ENCODE measurements at regions of chr2 and their contacts with region 1.

Region 1: DNA sequence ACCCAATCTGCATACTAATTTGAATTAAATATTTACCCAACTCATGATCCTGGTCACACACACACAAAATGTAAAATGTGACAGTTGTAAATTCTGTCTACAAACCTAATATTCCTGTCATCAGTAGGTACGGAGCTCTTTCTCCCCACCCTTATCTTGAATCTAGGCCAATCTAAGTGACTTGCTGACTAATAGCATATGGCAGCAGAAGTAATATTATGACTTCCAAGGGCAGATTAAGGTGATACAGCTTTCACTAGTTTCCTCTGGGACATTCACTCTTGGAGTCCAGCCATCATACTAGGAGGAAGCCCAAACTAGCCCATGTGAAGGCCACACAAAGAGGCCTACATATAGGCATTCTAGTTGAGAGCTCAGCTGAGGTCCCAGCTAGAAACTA is 89.4 kb downstream of the TMEM131 start:
- DNase-seq: no peak
- ATAC-seq: no peak
- H3K4me3 ChIP-seq: no peak overlapping the region
- H3K27ac ChIP-seq: peak overlapping the region; percentile 76; the same call in 1 of the 2 replicates
- H3K4me1 ChIP-seq: peaks cover 40% of the 10 kb centered on the region
- H3K27me3 ChIP-seq: no peaks in the 10 kb centered on the region
- CTCF ChIP-seq: no peak
- EP300 ChIP-seq: no peak
- POLR2A ChIP-seq: no peak
- RAD21 ChIP-seq: no peak

Region 2: GRCh38 chr2:97816411-97816810 is 89.9 kb before region 1 on chr2:
- CTCF ChIA-PET with region 1: no interaction called
- POLR2A ChIA-PET with region 1: no interaction called
- RAD21 ChIA-PET with region 1: no interaction called
- SMC1A ChIA-PET with region 1: no interaction called
- in situ Hi-C with region 1: no loop called
- intact Hi-C with region 1: no loop called
- DNase-seq: no peak
- ATAC-seq: no peak
- H3K4me3 ChIP-seq: no peak overlapping the region
- H3K27ac ChIP-seq: no peak overlapping the region
- H3K4me1 ChIP-seq: no peaks in the 10 kb centered on the region
- H3K27me3 ChIP-seq: no peaks in the 10 kb centered on the region
- CTCF ChIP-seq: no peak
- EP300 ChIP-seq: no peak
- POLR2A ChIP-seq: no peak
- RAD21 ChIP-seq: no peak

Region 3: GRCh38 chr2:97870396-97870843 is 35.9 kb before region 1 on chr2:
- CTCF ChIA-PET with region 1: interaction called, 3 read pairs
- POLR2A ChIA-PET with region 1: interaction called, 3 read pairs
- RAD21 ChIA-PET with region 1: interaction called, 6 read pairs
- SMC1A ChIA-PET with region 1: interaction called, 17 read pairs
- in situ Hi-C with region 1: no loop called
- intact Hi-C with region 1: loop called (anchors 2 kb)
- DNase-seq: peak; percentile 87
- ATAC-seq: peak; percentile 100
- H3K4me3 ChIP-seq: no peak overlapping the region
- H3K27ac ChIP-seq: peak overlapping the region; percentile 33; the same call in 1 of the 2 replicates
- H3K4me1 ChIP-seq: peaks cover 20% of the 10 kb centered on the region
- H3K27me3 ChIP-seq: no peaks in the 10 kb centered on the region
- CTCF ChIP-seq: peak in 2 of 3 experiments; percentile 13 to 66; a peak in 3 of 6 replicates
- EP300 ChIP-seq: peak in 1 of 2 experiments; percentile 41; a peak in 1 of 4 replicates
- POLR2A ChIP-seq: no peak
- RAD21 ChIP-seq: peak; percentile 64

Region 4: GRCh38 chr2:97935719-97936161 is 29.4 kb after region 1 on chr2:
- CTCF ChIA-PET with region 1: interaction called, 8 read pairs
- POLR2A ChIA-PET with region 1: interaction called, 13 read pairs
- RAD21 ChIA-PET with region 1: interaction called, 36 read pairs
- SMC1A ChIA-PET with region 1: interaction called, 12 read pairs
- in situ Hi-C with region 1: no loop called
- intact Hi-C with region 1: no loop called
- DNase-seq: no peak
- ATAC-seq: peak; percentile 25
- H3K4me3 ChIP-seq: peak overlapping the region; percentile 11; the same call in 1 of the 2 replicates
- H3K27ac ChIP-seq: peak overlapping the region; percentile 63
- H3K4me1 ChIP-seq: peaks cover 55% of the 10 kb centered on the region
- H3K27me3 ChIP-seq: no peaks in the 10 kb centered on the region
- CTCF ChIP-seq: no peak
- EP300 ChIP-seq: no peak
- POLR2A ChIP-seq: no peak
- RAD21 ChIP-seq: no peak

Region 5: GRCh38 chr2:97950329-97951154 is 44.2 kb after region 1 on chr2:
- CTCF ChIA-PET with region 1: interaction called, 3 read pairs
- POLR2A ChIA-PET with region 1: interaction called, 3 read pairs
- RAD21 ChIA-PET with region 1: interaction called, 6 read pairs
- SMC1A ChIA-PET with region 1: interaction called, 8 read pairs
- in situ Hi-C with region 1: no loop called
- intact Hi-C with region 1: loop called (anchors 2 kb)
- DNase-seq: no peak
- ATAC-seq: no peak
- H3K4me3 ChIP-seq: no peak overlapping the region
- H3K27ac ChIP-seq: no peak overlapping the region
- H3K4me1 ChIP-seq: peaks cover 38% of the 10 kb centered on the region
- H3K27me3 ChIP-seq: no peaks in the 10 kb centered on the region
- CTCF ChIP-seq: no peak
- EP300 ChIP-seq: no peak
- POLR2A ChIP-seq: no peak
- RAD21 ChIP-seq: no peak

Region 6: DNA sequence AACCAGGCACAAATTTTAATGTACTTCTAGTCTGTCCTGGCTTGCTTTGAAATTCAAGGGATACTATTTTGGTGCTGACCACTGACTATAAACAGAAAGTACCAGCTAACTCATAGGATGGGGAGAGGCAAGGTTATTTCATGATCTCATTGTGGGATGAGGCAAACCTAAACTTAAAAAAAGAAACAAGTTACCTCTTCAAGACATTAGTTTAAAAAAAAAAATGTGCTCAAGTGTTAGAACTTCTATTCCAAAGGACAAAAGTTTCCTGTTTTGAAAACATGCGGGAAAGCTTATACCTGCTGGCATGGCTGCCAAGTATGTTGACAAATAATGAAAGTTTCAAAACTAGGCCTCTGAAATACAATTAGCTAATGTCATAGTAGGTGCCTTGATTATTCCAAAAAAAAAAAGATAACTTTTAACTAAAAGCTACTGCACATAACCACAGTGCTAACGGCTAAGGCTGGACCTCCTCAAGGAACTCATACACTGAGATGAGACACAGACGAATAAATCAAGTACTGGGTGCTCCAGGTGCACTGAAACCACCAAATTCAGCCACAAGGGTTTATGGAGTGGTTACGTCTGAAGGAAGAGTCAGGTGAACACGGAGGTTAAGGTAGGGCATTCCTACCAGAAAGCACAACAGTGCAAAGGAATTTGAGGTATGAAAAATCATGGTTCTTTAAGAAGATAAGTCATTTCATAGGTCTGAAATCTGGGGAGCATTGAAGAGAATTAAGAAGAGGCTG is 51.3 kb after region 1 on chr2:
- CTCF ChIA-PET with region 1: interaction called, 3 read pairs
- POLR2A ChIA-PET with region 1: interaction called, 4 read pairs
- RAD21 ChIA-PET with region 1: interaction called, 8 read pairs
- SMC1A ChIA-PET with region 1: interaction called, 16 read pairs
- in situ Hi-C with region 1: no loop called
- intact Hi-C with region 1: loop called (anchors 2 kb)
- DNase-seq: no peak
- ATAC-seq: peak; percentile 58
- H3K4me3 ChIP-seq: peak overlapping the region; percentile 39; the same call in 1 of the 2 replicates
- H3K27ac ChIP-seq: 0 out of 2 replicates have a peak overlapping the region, but pooled peaks have one; percentile 10
- H3K4me1 ChIP-seq: peaks cover 34% of the 10 kb centered on the region
- H3K27me3 ChIP-seq: no peaks in the 10 kb centered on the region
- CTCF ChIP-seq: no peak
- EP300 ChIP-seq: no peak
- POLR2A ChIP-seq: no peak
- RAD21 ChIP-seq: no peak

Region 7: GRCh38 chr2:98012561-98012991 is 106.3 kb after region 1 on chr2:
- CTCF ChIA-PET with region 1: no interaction called
- POLR2A ChIA-PET with region 1: interaction called, 3 read pairs
- RAD21 ChIA-PET with region 1: interaction called, 3 read pairs
- SMC1A ChIA-PET with region 1: interaction called, 3 read pairs
- in situ Hi-C with region 1: no loop called
- intact Hi-C with region 1: loop called (anchors 2 kb)
- DNase-seq: peak; percentile 88
- ATAC-seq: peak; percentile 83
- H3K4me3 ChIP-seq: peak overlapping the region; percentile 46
- H3K27ac ChIP-seq: peak overlapping the region; percentile 97
- H3K4me1 ChIP-seq: peaks cover 55% of the 10 kb centered on the region
- H3K27me3 ChIP-seq: no peaks in the 10 kb centered on the region
- CTCF ChIP-seq: no peak
- EP300 ChIP-seq: peak; percentile 85 to 99; a peak in 3 of 4 replicates
- POLR2A ChIP-seq: peak; percentile 59; the same call in 1 of the 2 replicates
- RAD21 ChIP-seq: 0 out of 2 replicates have a peak, but pooled peaks have one; percentile 24

Region 8: GRCh38 chr2:98026927-98027522 is 120.7 kb after region 1 on chr2:
- CTCF ChIA-PET with region 1: interaction called, 6 read pairs
- POLR2A ChIA-PET with region 1: no interaction called
- RAD21 ChIA-PET with region 1: interaction called, 13 read pairs
- SMC1A ChIA-PET with region 1: interaction called, 13 read pairs
- in situ Hi-C with region 1: no loop called
- intact Hi-C with region 1: loop called (anchors 2 kb)
- DNase-seq: peak; percentile 98
- ATAC-seq: peak; percentile 93
- H3K4me3 ChIP-seq: peak overlapping the region; percentile 53
- H3K27ac ChIP-seq: peak overlapping the region; percentile 80
- H3K4me1 ChIP-seq: peaks cover 35% of the 10 kb centered on the region
- H3K27me3 ChIP-seq: no peaks in the 10 kb centered on the region
- CTCF ChIP-seq: no peak
- EP300 ChIP-seq: peak; percentile 87 to 93
- POLR2A ChIP-seq: no peak
- RAD21 ChIP-seq: no peak

Measured in GM12878 (cell line).